OCI-LY7 (cell line): ENCODE measurements at regions of chr12 and their contacts with region 1.

Region 1: DNA sequence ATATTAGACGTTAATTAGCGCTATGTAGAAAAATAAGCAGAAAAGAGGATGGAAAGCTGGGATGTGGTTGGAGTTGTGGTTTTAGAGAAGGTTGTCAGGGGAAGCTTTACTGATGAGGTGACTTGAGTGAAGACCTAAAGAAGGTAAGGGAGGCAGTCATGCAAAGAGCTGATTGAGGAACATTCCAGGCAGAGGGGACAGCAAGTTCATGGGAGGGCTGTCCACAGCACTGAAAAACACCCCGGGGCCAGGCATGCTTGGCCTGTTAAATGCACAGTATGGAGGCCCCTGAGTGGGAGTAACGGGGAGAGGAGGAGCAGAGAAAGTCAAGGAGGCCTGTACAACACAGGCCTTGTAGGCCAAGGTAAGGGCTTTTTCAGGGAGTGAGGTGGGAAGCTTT is 15.6 kb downstream of the SMAGP start:
- DNase-seq: no peak
- H3K4me3 ChIP-seq: no peak overlapping the region
- H3K27ac ChIP-seq: no peak overlapping the region
- H3K4me1 ChIP-seq: no peaks in the 10 kb centered on the region
- CTCF ChIP-seq: no peak

Region 2: GRCh38 chr12:50839042-50839441 is 415.6 kb before region 1 on chr12:
- CTCF ChIA-PET with region 1: no interaction called
- POLR2A ChIA-PET with region 1: no interaction called
- intact Hi-C with region 1: loop called (anchors 10 kb)
- DNase-seq: no peak
- H3K4me3 ChIP-seq: no peak overlapping the region
- H3K27ac ChIP-seq: no peak overlapping the region
- H3K4me1 ChIP-seq: no peaks in the 10 kb centered on the region
- CTCF ChIP-seq: no peak